ENCODE measurements at regions of chr7 and their contacts with region 1.

Region 1: GRCh38 chr7:52233248-52233647 is 802.2 kb upstream of the POM121L12 start:
- DNase-seq: no peak
- H3K4me3 ChIP-seq: no peak overlapping the region
- H3K27ac ChIP-seq: no peak overlapping the region
- H3K4me1 ChIP-seq: no peaks in the 10 kb centered on the region
- H3K27me3 ChIP-seq: no peaks in the 10 kb centered on the region
- CTCF ChIP-seq: no peak

Region 2: GRCh38 chr7:52168085-52168484 is 65.2 kb before region 1 on chr7:
- intact Hi-C with region 1: loop called (anchors 10 kb)
- DNase-seq: no peak
- H3K4me3 ChIP-seq: no peak overlapping the region
- H3K27ac ChIP-seq: no peak overlapping the region
- H3K4me1 ChIP-seq: no peaks in the 10 kb centered on the region
- H3K27me3 ChIP-seq: no peaks in the 10 kb centered on the region
- CTCF ChIP-seq: no peak